A673 (cell line): ENCODE measurements at regions of chr11 and their contacts with region 1.

Region 1: DNA sequence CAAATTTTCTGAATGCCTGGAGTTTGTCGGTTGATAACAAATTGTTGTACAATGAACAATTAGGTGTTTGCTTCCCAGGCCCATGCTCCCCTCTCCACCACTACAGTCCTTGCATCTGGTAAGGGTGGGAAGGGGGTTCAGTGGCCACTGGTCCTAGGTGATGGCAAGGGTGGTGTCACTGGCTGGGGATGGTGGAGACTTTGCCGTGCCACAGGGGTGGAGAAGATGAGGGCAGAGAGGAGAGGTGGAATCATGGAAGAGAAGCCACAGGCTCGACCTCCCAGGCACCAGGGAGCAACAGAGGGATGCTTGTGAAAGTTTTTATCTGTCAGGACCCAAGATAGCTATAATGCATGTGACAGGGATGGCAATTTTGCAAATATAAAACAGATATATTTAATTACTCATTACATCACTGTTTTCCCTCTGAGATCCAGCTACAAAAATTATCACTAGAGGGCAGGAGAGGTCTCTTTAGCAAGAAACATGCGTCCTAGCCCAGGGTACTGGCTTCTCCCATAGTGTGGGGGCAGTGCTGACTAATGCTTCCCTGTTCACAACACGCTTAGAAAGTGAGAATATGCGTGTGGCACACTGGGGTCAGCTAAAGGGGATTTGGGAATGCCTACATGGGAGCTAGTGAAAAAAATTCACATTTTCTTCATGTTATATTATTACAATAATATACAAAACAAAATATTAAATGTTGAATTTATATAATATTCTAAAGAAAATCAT is 49.0 kb upstream of the AMPD3 start:
- DNase-seq: peak; percentile 94
- H3K4me3 ChIP-seq: no peak overlapping the region
- H3K27ac ChIP-seq: peak overlapping the region; percentile 38
- H3K4me1 ChIP-seq: peaks cover 21% of the 10 kb centered on the region
- H3K27me3 ChIP-seq: no peaks in the 10 kb centered on the region
- CTCF ChIP-seq: peak; percentile 75

Region 2: GRCh38 chr11:10526974-10527918 is 121.2 kb after region 1 on chr11:
- CTCF ChIA-PET with region 1: no interaction called
- POLR2A ChIA-PET with region 1: no interaction called
- intact Hi-C with region 1: no loop called
- DNase-seq: no peak
- H3K4me3 ChIP-seq: no peak overlapping the region
- H3K27ac ChIP-seq: peak overlapping the region; percentile 11
- H3K4me1 ChIP-seq: peaks cover 31% of the 10 kb centered on the region
- H3K27me3 ChIP-seq: no peaks in the 10 kb centered on the region
- CTCF ChIP-seq: no peak

Region 3: DNA sequence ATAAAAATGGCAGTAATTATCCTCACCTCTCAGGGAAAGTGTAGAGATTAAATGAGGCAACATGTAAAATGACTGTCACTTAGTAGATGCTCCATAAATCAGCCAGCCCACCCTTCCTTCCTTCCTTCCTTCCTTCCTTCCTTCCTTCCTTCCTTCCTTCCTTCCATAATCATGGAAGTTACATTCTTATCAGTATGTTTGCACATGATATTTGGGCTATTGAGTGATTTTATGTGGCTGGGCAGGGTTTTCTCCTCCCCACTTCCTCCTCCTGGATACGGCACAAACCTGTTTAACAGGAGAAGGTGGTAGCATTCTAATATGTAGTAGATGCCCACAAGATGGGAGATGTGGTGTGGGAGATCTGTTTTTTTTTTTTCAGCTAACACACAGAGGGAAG is 150.6 kb after region 1 on chr11:
- CTCF ChIA-PET with region 1: no interaction called
- POLR2A ChIA-PET with region 1: interaction called, 5 read pairs
- intact Hi-C with region 1: loop called (anchors 5 kb)
- DNase-seq: peak; percentile 93
- H3K4me3 ChIP-seq: no peak overlapping the region
- H3K27ac ChIP-seq: peak overlapping the region; percentile 100
- H3K4me1 ChIP-seq: peaks cover 40% of the 10 kb centered on the region
- H3K27me3 ChIP-seq: no peaks in the 10 kb centered on the region
- CTCF ChIP-seq: no peak

Region 4: DNA sequence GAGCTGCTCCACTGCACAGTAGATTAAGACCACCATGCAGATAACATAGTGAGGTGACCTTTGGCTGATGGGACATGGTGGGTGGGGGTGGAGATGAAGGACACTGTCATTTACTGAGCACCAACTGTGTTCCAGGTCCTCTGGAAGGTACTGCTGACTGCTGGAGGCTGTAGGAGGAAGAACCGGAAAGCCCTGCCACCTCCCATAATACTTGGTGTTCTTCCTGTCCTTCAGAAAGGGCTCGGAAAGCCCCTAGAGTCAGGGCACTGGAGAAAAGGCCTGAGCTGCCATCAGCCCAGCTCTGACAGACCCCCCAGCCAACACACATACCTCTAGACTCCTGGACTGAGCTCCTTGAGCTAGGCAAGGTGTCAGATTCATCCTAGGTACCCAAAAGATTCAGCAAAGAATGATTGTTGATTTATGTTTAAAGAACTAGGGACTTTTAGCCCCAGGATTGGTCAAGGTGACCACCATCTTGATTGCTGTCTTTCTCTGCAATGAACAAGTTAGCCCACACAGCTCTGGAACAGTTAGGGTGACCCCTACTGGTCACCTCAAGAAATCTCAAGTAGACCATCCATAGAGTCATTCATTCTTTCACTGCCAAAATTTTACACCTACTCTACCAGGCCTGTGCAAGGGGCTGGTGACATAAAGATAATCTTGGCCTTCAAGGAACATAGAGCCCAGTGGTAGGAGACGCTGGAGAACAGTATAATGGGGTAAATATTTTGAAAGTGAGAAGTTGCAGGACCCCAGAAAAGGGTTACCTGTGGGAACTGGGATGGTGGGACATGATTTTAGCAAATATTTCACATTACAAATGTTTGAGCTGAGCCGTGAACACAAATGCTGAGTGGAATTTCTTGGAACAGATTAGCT is 248.1 kb after region 1 on chr11:
- CTCF ChIA-PET with region 1: no interaction called
- POLR2A ChIA-PET with region 1: no interaction called
- intact Hi-C with region 1: loop called (anchors 2 kb)
- DNase-seq: peak; percentile 73
- H3K4me3 ChIP-seq: no peak overlapping the region
- H3K27ac ChIP-seq: peak overlapping the region; percentile 68
- H3K4me1 ChIP-seq: peaks cover 73% of the 10 kb centered on the region
- H3K27me3 ChIP-seq: no peaks in the 10 kb centered on the region
- CTCF ChIP-seq: peak; percentile 74